GM18951 (cell line): ENCODE measurements at regions of chr4 and their contacts with region 1.

Region 1: DNA sequence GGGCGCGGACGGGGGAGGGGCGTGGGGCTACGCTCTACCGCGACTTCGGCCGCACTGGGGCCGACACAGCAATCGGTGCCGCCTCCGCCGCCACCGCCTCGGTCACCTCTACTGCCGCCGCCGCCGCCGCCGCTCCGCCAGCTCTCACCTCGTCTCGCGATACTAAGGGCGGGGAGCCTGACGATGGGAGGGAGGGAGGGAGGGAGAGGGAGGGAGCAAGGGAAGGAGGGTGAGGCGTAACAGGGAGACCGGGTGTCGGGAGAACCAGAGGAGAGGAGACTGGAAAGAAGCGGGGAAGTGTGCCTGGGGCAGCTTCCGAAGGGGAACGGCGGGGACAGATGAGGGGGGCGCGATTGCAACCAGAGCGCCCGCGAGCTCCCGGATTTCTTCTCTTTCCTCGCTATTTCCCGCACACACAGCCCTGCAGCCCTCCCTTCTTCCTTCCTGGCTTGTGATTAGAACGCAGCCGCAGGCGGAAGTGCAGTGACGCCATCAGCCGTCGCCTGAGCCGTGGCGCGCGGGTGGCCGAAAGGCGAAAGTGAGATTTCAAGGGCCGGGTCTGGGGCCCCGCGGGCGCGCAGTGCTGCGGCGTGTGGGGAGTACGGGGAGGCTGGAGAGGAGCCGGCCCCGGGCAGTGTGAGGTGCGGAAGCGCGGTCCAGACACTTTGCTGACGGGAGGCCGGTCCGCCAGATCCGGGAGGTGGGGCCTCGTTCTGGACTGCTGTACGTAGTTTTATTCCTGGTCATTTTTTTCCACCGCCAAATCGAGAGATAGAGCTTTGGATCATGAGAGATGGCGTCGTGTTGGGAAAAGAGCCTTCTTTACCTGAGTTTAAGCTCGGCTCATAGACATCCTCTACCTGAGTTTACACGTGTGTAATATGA is at the start of gene ANKRD17:
- POLR2A ChIP-seq: peak; percentile 92

Region 2: GRCh38 chr4:72405417-72405816 is 853.5 kb before region 1 on chr4:
- in situ Hi-C with region 1: no loop called
- POLR2A ChIP-seq: no peak

Region 3: DNA sequence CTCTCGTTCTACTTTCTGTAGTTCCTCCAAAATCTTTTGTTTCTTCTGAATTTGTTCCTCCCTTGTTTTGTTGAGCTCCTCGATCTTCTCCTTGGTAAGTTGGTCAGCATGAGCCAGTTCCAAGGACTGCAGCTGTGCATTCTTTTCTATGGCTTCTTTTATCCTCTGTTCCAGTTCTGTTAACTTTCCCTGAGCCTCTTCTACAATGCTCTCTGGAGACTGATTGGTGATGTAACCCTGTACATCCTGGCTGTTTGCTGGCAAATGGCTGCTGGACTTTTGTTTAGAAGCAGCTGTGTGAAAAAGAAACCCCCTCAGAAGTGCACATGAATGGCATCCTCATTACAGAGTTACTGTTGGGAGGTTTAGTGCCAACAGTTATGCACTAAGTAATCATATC is 118.9 kb before region 1 on chr4:
- in situ Hi-C with region 1: loop called (anchors 10 kb)
- POLR2A ChIP-seq: no peak

Region 4: GRCh38 chr4:73499996-73500765 is 241.3 kb after region 1 on chr4:
- in situ Hi-C with region 1: no loop called
- POLR2A ChIP-seq: no peak